Caco-2 (cell line): ENCODE measurements at regions of chr1 and their contacts with region 1.

Region 1: GRCh38 chr1:54384911-54385726 is 21.1 kb downstream of the SSBP3 start:
- DNase-seq: no peak
- H3K4me3 ChIP-seq: no peak overlapping the region
- H3K4me3 Mint-ChIP-seq: peak overlapping the region; percentile 7
- H3K27ac Mint-ChIP-seq: peak overlapping the region; percentile 74
- H3K4me1 ChIP-seq: peaks cover 29% of the 10 kb centered on the region
- H3K4me1 Mint-ChIP-seq: peaks cover 21% of the 10 kb centered on the region
- H3K27me3 ChIP-seq: no peaks in the 10 kb centered on the region
- H3K27me3 Mint-ChIP-seq: no peaks in the 10 kb centered on the region
- CTCF ChIP-seq: no peak

Region 2: GRCh38 chr1:54347955-54348699 is 37.0 kb before region 1 on chr1:
- CTCF ChIA-PET with region 1: no interaction called
- POLR2A ChIA-PET with region 1: no interaction called
- intact Hi-C with region 1: loop called (anchors 5 kb)
- DNase-seq: peak; percentile 46 to 62
- H3K4me3 ChIP-seq: no peak overlapping the region
- H3K4me3 Mint-ChIP-seq: no peak overlapping the region
- H3K27ac Mint-ChIP-seq: peak overlapping the region; percentile 50
- H3K4me1 ChIP-seq: peaks cover 12% of the 10 kb centered on the region
- H3K4me1 Mint-ChIP-seq: no peaks in the 10 kb centered on the region
- H3K27me3 ChIP-seq: no peaks in the 10 kb centered on the region
- H3K27me3 Mint-ChIP-seq: no peaks in the 10 kb centered on the region
- CTCF ChIP-seq: no peak